ENCODE measurements at regions of chr11 and their contacts with region 1.

Region 1: DNA sequence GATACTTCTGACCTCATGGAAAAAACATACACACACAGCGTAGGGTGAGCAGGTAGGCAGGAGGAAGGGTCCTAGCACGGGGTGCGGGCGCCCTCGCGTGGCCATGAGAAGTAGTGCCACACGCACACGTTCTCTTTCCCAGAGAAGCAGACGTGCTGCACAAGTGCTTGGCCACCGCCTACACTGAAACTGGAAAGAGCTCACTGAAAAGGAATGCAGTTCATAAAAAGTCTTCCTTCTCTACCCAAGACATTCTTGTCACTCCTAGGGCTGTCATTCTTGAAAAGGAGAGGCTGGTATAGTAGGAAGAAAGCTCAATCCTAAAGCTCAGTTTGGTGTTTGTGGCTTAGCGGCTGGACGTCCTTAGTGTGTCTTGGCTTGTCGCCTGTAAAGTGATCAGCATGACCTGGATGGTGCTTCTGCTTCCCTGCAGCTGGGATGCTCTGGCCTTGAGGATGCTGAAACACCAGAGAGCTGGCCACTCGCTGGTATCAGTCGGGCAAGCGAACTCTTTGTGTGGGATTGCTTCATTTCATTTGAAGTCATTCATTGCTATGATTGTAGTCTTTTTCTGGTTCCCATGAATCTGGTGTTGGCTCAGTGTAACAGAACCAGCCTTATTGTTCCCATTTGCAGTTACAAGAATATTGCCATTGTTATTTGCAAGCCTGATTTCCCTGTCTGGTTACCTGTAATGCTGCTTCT is 303.8 kb downstream of the NTM start:
- DNase-seq: peak; percentile 20
- H3K4me3 Mint-ChIP-seq: no peak overlapping the region
- H3K27ac Mint-ChIP-seq: no peak overlapping the region
- H3K4me1 Mint-ChIP-seq: no peaks in the 10 kb centered on the region
- H3K27me3 Mint-ChIP-seq: no peaks in the 10 kb centered on the region
- CTCF ChIP-seq: peak; percentile 70

Region 2: DNA sequence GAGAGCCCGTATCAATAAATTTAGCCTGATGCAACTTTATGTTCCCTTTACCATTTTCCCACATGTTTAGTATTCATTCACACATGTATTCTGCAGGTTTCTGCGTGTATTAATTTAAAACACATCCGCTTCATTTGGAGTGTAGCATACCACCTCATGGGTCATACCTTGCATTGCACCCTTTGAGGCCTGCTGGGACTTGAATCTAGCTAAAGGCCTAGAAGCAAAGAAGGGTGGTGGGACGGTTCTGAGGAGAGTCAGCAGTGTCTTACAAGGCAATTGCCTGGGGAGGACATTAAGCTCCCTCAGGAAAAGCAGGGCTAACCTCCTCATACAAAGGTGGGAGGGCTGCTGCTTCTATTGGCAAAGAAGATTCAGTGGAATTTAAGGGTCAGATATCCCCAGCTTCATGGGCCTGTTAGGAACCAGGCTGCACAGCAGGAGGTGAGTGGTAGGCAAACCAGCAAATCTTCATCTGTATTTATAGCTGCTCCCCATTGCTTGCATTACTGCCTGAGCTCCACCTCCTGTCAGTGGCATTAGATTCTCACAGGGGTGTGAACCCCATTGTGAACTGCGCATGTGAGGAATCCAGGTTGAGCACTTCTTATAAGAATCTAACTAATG is 742.0 kb before region 1 on chr11:
- CTCF ChIA-PET with region 1: interaction called, 12 read pairs
- POLR2A ChIA-PET with region 1: no interaction called
- intact Hi-C with region 1: no loop called
- DNase-seq: no peak
- H3K4me3 Mint-ChIP-seq: no peak overlapping the region
- H3K27ac Mint-ChIP-seq: no peak overlapping the region
- H3K4me1 Mint-ChIP-seq: no peaks in the 10 kb centered on the region
- H3K27me3 Mint-ChIP-seq: no peaks in the 10 kb centered on the region
- CTCF ChIP-seq: no peak

Region 3: DNA sequence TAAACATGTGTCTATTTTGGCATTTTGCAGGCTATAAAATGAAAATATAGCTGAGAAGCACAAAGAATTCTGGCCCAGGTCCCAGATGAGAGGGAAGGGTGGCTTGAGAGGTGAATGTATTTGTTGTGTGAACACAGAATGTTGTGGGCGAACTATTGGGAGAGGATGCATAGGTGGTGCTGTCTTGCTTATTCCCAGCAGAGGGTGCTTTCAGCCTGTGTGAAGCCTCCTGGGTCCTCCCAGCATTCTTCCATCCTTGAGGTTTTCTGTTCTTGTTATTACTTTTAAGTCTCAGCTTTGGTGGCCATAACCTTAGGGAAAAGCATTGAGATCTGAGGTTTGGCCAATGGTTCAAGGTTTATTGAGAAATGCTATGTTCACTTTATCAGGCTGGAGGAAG is 649.2 kb before region 1 on chr11:
- CTCF ChIA-PET with region 1: interaction called, 14 read pairs
- POLR2A ChIA-PET with region 1: no interaction called
- intact Hi-C with region 1: loop called (anchors 5 kb)
- DNase-seq: peak; percentile 65
- H3K4me3 Mint-ChIP-seq: no peak overlapping the region
- H3K27ac Mint-ChIP-seq: no peak overlapping the region
- H3K4me1 Mint-ChIP-seq: peaks cover 7% of the 10 kb centered on the region
- H3K27me3 Mint-ChIP-seq: no peaks in the 10 kb centered on the region
- CTCF ChIP-seq: peak; percentile 41

Region 4: GRCh38 chr11:131408025-131408640 is 266.1 kb before region 1 on chr11:
- CTCF ChIA-PET with region 1: no interaction called
- POLR2A ChIA-PET with region 1: no interaction called
- intact Hi-C with region 1: loop called (anchors 5 kb)
- DNase-seq: no peak
- H3K4me3 Mint-ChIP-seq: no peak overlapping the region
- H3K27ac Mint-ChIP-seq: no peak overlapping the region
- H3K4me1 Mint-ChIP-seq: no peaks in the 10 kb centered on the region
- H3K27me3 Mint-ChIP-seq: no peaks in the 10 kb centered on the region
- CTCF ChIP-seq: peak; percentile 28

Region 5: DNA sequence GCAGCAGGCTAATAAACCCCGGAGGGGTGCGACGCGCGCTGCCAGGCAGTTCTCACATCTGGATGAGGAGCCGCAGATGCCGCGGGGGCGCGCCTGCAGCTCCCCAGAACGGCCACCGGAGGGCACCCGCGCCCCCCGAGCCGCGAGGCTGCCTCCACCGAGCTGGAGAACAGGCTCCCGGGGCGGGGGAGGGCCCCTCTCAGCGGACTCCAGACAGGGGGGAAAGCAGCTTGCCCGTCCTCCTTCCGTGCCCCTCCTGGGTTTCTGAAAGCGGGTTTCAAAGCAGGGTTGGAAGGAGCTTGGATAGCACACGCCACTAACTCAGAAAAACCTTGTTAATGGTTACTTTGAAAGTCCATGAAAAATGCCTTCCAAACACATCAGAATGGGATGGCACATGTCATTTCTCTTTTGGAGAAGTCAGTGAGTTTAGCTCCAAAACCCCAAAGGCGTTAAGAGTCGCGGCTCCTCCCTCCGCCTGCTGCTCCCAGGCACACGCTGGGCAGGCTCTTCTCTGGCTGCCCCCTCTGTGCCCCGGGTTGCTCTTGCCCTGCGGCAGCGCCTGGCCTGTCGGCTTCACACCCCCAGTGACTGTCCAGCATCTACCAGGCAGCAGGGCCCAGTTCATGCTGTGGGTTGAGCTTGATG is 14.0 kb after region 1 on chr11:
- CTCF ChIA-PET with region 1: interaction called, 26 read pairs
- POLR2A ChIA-PET with region 1: no interaction called
- intact Hi-C with region 1: no loop called
- DNase-seq: no peak
- H3K4me3 Mint-ChIP-seq: no peak overlapping the region
- H3K27ac Mint-ChIP-seq: no peak overlapping the region
- H3K4me1 Mint-ChIP-seq: no peaks in the 10 kb centered on the region
- H3K27me3 Mint-ChIP-seq: no peaks in the 10 kb centered on the region
- CTCF ChIP-seq: peak; percentile 21

Measured in MCF 10A (cell line).